ENCODE measurements at regions of chr17 and their contacts with region 1.

Region 1: GRCh38 chr17:48804925-48805411 is 12.1 kb downstream of the TTLL6 start:
- DNase-seq: peak; percentile 89

Region 2: GRCh38 chr17:48816774-48817590 is 12.0 kb after region 1 on chr17 and contains the start of gene TTLL6:
- CTCF ChIA-PET with region 1: interaction called, 18 read pairs
- POLR2A ChIA-PET with region 1: interaction called, 3 read pairs
- DNase-seq: peak; percentile 90

Measured in HEK293T (cell line).